ENCODE measurements at regions of chr1 and their contacts with region 1.

Region 1: DNA sequence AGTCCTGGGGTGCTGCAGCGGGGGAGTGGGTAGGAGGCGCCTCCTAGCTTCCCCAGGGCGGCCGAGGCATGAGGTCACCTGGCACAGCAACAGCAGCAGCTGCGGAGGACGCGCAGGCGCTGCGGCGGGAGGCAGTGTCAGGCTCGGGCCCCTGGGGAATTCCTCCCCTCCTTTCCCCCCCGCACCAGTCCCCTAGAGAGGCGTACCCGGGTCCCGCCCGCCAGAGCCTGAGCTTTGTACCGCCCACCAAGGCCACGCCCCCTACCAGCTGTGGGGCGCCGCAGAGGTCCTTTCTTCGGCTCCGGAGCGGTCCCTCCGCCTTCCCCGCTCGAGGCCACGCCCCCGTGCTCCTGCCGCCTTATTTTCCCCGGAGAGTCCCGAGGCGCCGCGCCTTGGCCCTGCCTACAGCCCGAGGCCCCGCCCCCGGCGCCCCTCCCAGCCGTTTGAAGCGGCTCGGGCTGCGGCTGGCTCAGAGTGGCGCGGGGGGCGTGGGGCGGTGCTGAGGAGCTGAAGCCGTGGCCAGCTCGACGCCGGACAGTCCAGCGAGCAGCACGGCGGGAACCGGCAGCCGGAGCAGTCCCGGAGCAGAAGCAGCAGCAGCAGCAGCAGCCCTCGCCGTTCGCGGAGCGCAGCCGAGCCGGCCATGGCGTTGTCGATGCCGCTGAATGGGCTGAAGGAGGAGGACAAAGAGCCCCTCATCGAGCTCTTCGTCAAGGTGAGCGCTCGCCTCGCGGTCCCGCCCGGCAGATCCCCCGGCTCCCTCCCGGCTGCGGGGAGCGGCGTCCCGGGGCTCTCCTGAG is at the start of gene CLIC4:
- DNase-seq: peak; percentile 95
- H3K4me3 ChIP-seq: peak within 1 kb of the TSS; percentile 94
- CTCF ChIP-seq: peak; percentile 44

Region 2: GRCh38 chr1:24695202-24695974 is 49.7 kb before region 1 on chr1:
- CTCF ChIA-PET with region 1: interaction called, 30 read pairs
- POLR2A ChIA-PET with region 1: interaction called, 10 read pairs
- DNase-seq: no peak
- H3K4me3 ChIP-seq: no peak overlapping the region
- CTCF ChIP-seq: no peak

Region 3: DNA sequence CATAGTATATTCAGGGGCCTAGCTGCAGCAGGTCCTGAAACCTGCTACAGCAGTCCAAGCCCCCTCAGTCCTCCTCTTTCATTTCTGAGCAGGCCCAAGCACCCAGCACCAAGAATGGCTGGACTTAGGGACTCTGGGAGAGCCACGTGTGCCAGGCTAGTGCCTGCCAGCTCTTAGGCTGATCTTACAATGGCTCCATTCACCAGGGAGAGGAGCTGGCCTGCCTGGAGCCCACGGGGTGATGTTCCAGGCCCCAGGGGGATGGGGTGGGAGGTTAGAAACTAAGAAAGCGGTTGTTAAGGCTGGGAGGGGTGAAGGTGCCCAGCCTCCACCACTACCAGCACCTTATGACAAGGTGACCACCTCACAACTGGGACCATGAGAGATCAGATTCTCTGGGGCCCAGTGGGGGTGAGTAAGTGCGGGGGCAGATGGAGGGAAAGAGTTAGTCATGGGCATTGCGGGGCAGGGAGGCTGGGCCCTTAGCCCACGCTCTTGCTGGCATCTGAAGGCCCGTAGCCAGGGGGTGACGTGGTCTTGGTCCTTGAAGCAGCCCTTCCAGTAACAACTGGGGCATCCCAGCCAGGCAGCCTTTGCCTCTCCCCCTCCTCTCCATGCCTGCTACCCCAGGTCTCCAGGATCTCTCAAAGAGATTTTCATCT is 30.1 kb before region 1 on chr1:
- CTCF ChIA-PET with region 1: interaction called, 4 read pairs
- POLR2A ChIA-PET with region 1: interaction called, 29 read pairs
- DNase-seq: no peak
- H3K4me3 ChIP-seq: no peak overlapping the region
- CTCF ChIP-seq: no peak

Region 4: DNA sequence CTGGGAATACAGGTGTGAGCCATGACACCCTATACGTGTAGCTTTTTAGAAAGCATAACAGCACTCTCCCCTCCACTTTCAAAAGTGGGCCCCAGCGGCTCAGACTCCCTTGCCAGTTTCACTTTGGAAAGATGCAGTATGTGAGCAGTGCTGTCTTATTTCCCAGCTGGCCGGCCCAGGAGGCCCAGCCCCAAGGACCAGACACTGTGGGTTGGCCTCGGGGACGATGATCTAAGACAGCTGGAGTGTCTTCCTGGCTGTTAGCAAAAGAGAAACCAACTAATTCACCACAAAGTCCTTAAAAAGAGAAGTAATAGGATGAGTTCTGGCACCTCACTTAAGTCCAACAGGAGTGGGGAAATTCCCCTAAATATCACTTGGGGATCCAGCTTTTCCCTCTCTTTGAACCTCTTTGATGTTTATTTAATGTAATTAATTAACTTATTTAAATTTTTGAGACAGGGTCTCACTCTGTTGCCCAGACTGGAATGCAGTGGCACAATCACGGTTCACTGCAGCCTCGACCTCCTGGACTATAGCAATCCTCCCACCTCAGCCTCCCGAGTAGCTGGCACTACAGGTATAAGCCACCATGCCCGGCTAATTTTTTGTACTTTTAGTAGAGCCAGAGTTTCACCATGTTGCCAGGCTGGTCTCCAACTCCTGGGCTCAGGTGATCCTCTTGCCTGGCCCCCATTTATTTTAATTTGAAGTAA is 17.5 kb before region 1 on chr1:
- CTCF ChIA-PET with region 1: interaction called, 12 read pairs
- POLR2A ChIA-PET with region 1: interaction called, 18 read pairs
- DNase-seq: no peak
- H3K4me3 ChIP-seq: peak overlapping the region; percentile 27
- CTCF ChIP-seq: no peak

Region 5: GRCh38 chr1:24769656-24770651 is 24.8 kb after region 1 on chr1:
- CTCF ChIA-PET with region 1: interaction called, 4 read pairs
- POLR2A ChIA-PET with region 1: interaction called, 28 read pairs
- DNase-seq: peak; percentile 94
- H3K4me3 ChIP-seq: no peak overlapping the region
- CTCF ChIP-seq: no peak

Measured in AG04449 (cell line).